Activated T-helper 1 cell treated with anti-CD3 and anti-CD28 coated beads, Interleukin-12 subunit alpha, Interleukin-12 subunit beta, Interleukin-2, Interleukin-4 antibody, amounts not matched to agents 30 ng/mL and 10 ng/mL and 1 ng/mL, durations not matched to agents 14 hours and 24 hours and 36 hours (primary cell): ENCODE measurements at regions of chr9 and their contacts with region 1.

Region 1: GRCh38 chr9:126781186-126782052 is 23.4 kb upstream of the ZBTB43 start:
- DNase-seq: peak; percentile 66
- H3K4me3 Mint-ChIP-seq: no peak overlapping the region
- H3K27ac Mint-ChIP-seq: no peak overlapping the region
- H3K4me1 Mint-ChIP-seq: no peaks in the 10 kb centered on the region
- H3K27me3 Mint-ChIP-seq: peaks cover 9% of the 10 kb centered on the region

Region 2: DNA sequence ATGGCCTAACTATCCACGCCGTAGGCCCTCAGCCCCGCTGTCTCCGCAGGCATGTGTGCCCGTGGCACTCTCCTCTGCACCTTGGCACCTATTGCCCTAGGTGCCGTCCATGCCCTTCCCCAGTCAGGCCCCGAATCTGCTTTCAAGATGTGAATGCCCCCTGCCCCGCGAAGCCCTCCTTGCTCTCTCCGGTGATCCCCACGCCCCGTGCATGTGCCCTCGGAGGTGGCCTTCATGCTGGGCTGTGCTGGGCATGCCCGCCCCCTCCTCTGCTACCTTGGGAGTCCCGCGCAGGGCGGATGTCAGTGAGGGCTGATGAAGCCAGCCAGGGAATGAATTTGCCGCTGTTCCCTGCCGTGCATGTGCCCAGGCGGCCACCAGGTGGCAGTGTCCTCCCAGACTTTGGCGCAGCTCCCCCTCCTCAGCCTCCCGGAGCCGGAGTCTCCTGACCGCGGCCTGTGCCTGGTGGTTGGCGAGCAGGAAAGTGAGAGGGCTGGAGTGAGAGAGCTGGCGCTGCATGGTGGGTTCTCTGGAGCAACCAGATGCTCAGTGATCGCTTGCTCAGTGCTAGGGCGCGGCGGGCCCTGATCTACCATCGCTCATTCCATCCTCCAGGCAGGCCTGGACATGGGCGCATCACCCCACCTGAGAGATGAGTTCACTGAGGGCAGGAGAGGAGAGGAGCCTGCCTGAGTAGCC is 280.6 kb before region 1 on chr9:
- intact Hi-C with region 1: loop called (anchors 5 kb)
- DNase-seq: peak; percentile 41
- H3K4me3 Mint-ChIP-seq: no peak overlapping the region
- H3K27ac Mint-ChIP-seq: no peak overlapping the region
- H3K4me1 Mint-ChIP-seq: no peaks in the 10 kb centered on the region
- H3K27me3 Mint-ChIP-seq: peaks cover 18% of the 10 kb centered on the region

Region 3: DNA sequence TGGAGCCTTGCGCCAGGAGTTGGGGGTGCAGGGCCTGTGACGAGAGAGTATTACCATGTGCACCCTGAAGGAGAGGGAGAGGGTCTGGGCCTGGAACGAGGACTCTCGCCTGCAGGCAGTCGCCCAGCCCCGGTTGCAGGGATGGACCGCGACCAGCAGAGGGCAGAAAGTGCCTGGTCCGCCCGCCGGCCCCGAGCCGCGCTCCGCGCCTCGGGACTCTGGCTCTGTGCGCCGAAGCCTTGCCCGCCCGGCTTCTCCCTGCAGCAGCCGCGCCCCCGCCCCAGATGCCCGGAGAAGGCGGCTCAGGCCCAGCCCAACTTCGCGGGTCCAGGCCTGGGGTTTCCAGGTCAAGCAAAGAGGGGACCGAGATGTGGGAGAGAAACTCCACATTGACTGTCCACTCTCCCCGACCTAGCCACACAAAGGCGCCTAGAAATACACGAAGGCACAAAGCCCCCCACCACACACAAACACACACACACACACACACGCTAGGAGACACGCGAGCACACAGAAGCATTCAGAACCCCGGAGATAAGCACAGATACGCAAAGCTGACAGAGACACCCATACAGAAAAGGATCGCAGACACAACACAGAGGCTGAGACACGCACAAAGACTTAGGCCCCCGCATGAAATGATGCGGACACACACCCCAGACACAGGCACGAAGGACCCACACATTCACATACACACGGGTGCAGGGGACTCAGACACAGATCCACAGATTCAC is 169.7 kb before region 1 on chr9:
- intact Hi-C with region 1: loop called (anchors 1 kb)
- DNase-seq: peak; percentile 58
- H3K4me3 Mint-ChIP-seq: no peak overlapping the region
- H3K27ac Mint-ChIP-seq: peak overlapping the region; percentile 55
- H3K4me1 Mint-ChIP-seq: peaks cover 8% of the 10 kb centered on the region
- H3K27me3 Mint-ChIP-seq: peaks cover 63% of the 10 kb centered on the region